ENCODE measurements at regions of chr21 and their contacts with region 1.

Region 1: DNA sequence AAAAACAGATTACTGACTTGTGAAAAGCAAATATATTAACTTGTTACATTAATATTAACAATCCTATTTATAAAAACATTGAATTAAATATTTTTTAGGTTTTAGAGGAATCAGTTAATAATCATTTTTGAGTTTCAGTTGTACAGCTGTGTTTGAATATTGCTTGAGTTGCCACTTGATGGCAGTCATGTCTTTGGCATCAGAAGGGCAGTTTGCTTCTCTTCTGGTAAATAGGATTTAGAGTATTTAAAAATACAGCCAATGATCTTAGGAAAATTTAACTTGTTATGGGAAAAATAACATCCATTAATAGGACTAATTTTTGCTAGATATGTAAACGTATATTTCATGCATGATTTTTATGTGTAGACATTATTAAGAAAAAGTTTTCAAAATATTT is 234.1 kb downstream of the NCAM2 start:
- DNase-seq: peak in 3 of 10 donors; percentile 8 to 32 (median 19)

Region 2: DNA sequence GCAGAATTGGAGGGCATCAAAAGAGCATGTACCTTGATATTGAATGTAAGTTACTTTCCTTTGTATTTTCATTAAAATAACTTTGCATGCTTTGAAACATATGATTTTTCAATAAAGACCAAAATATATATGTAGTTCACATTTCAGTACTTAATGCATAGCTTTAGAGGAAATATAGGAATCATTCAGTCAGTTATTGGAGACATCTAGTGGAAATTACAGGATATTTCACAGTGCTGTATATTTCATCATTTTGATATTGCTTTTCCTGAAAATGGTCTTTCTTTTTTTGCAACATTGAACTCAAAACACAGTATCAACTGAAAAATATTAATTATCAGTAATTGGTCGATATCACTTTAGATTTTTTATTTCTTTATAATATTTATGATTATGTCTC is 141.6 kb after region 1 on chr21:
- intact Hi-C with region 1: loop called (anchors 5 kb)
- DNase-seq: no peak

Region 3: GRCh38 chr21:22791986-22792560 is 1559.8 kb after region 1 on chr21:
- intact Hi-C with region 1: loop called (anchors 5 kb)
- DNase-seq: peak in 1 of 10 donors; percentile 6